Esophagus muscularis mucosa (tissue), 4 donors: ENCODE measurements at regions of chr6 and their contacts with region 1.

Region 1: DNA sequence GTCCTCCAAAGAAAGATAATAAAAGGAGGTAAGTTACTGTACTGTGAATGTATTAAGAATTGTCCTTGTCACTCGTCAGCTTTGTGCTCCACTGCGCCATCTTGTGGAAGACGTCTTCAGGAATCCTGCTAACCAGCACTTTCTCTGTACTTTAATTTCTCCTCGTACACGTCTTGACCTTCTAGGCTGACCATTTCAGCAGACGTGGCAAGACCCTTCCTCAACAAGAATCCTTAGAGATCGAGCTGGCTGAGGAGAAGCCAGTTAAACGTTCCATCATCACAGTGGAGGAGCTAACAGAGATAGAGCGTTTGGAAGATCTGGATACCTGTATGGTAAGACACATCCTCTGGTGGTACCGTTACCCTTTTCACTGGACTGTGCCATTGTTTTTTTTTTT is 95.5 kb upstream of the SCGN start:
- DNase-seq: peak; percentile 94
- H3K4me3 ChIP-seq: no peak overlapping the region
- H3K27ac ChIP-seq: no peak overlapping the region
- H3K4me1 ChIP-seq: no peaks in the 10 kb centered on the region
- H3K27me3 ChIP-seq: no peaks in the 10 kb centered on the region
- CTCF ChIP-seq: peak; percentile 44 to 76 (median 71)
- EP300 ChIP-seq: no peak
- POLR2A ChIP-seq: no peak

Region 2: DNA sequence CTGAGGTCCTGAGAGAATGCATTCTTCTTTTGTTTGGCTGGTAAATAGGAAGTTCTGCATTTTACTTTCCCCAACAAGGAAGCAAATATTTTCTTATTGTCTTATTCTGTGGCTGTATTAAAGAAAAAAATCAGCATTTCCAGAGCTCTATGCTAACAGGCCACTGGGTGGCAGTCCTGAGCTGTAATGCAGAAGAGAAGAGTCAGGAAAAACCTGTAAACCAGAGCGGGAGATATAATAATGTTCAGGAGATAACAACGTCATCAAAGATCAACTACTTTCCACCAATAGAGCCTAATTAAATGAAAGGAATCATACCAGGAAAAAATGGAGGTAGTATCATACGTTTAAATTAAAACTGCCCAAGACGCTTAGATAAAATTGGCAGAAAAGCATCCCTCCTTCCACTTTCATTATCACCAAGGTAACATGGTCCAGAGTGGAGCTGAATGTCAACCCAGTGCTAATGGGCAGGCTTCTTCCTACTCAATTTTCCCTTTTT is 333.0 kb before region 1 on chr6:
- intact Hi-C with region 1: loop called (anchors 5 kb)
- DNase-seq: no peak
- H3K4me3 ChIP-seq: peak overlapping the region; percentile 19 to 39 (median 30)
- H3K27ac ChIP-seq: no peak overlapping the region
- H3K4me1 ChIP-seq: peaks cover 0 to 5% (median 5%) of the 10 kb centered on the region in 4 donors
- H3K27me3 ChIP-seq: no peaks in the 10 kb centered on the region
- CTCF ChIP-seq: peak; percentile 69 to 90 (median 75)
- EP300 ChIP-seq: no peak
- POLR2A ChIP-seq: no peak

Region 3: GRCh38 chr6:25266456-25267100 is 289.9 kb before region 1 on chr6:
- intact Hi-C with region 1: loop called (anchors 5 kb)
- DNase-seq: no peak
- H3K4me3 ChIP-seq: no peak overlapping the region
- H3K27ac ChIP-seq: peak overlapping the region in 1 of 4 donors; percentile 41
- H3K4me1 ChIP-seq: no peaks in the 10 kb centered on the region
- H3K27me3 ChIP-seq: no peaks in the 10 kb centered on the region
- CTCF ChIP-seq: no peak
- EP300 ChIP-seq: no peak
- POLR2A ChIP-seq: no peak

Region 4: DNA sequence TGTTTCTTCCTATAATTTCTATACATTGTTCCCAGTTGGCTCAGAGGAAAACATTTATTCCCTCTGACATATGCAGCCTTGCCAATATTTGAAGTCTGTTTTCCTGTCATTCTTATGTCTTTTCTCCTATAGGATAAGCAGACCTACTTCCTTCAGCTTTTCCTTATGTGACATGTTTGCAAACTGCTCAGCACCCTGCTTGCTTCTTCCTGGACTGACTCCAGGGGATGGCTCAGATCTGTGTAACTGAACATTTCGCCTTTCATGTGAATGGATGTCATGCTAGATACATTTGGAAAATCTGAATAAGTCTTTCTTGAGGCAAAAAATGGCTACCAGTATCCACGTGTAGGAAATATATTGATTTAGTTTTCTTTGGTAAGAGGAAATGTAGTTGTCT is 164.1 kb before region 1 on chr6:
- intact Hi-C with region 1: no loop called
- DNase-seq: no peak
- H3K4me3 ChIP-seq: no peak overlapping the region
- H3K27ac ChIP-seq: no peak overlapping the region
- H3K4me1 ChIP-seq: peaks cover 0 to 6% (median 5%) of the 10 kb centered on the region in 4 donors
- H3K27me3 ChIP-seq: no peaks in the 10 kb centered on the region
- CTCF ChIP-seq: no peak
- EP300 ChIP-seq: no peak
- POLR2A ChIP-seq: no peak

Region 5: DNA sequence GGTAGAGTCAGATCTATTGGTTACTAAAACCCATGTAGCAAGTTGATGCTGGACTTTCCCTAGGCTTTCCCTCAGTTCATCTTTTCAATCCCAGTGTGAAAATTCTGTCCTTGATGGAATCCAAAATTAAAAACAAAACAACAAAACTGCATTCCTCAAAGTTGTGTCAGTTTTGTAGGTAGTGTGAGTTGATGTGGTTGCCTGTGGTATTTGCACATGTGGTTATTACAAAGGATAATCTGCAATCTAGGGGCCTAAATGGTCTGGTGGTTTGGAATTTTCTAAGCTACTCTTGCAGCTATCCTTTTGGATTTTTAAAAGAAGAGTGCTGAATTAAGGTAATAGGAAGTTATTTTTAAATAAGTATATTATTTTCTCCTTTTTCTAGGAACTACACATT is 36.7 kb before region 1 on chr6:
- intact Hi-C with region 1: no loop called
- DNase-seq: no peak
- H3K4me3 ChIP-seq: no peak overlapping the region
- H3K27ac ChIP-seq: no peak overlapping the region
- H3K4me1 ChIP-seq: no peaks in the 10 kb centered on the region
- H3K27me3 ChIP-seq: no peaks in the 10 kb centered on the region
- CTCF ChIP-seq: no peak
- EP300 ChIP-seq: no peak
- POLR2A ChIP-seq: no peak